A673 (cell line): ENCODE measurements at regions of chr1 and their contacts with region 1.

Region 1: DNA sequence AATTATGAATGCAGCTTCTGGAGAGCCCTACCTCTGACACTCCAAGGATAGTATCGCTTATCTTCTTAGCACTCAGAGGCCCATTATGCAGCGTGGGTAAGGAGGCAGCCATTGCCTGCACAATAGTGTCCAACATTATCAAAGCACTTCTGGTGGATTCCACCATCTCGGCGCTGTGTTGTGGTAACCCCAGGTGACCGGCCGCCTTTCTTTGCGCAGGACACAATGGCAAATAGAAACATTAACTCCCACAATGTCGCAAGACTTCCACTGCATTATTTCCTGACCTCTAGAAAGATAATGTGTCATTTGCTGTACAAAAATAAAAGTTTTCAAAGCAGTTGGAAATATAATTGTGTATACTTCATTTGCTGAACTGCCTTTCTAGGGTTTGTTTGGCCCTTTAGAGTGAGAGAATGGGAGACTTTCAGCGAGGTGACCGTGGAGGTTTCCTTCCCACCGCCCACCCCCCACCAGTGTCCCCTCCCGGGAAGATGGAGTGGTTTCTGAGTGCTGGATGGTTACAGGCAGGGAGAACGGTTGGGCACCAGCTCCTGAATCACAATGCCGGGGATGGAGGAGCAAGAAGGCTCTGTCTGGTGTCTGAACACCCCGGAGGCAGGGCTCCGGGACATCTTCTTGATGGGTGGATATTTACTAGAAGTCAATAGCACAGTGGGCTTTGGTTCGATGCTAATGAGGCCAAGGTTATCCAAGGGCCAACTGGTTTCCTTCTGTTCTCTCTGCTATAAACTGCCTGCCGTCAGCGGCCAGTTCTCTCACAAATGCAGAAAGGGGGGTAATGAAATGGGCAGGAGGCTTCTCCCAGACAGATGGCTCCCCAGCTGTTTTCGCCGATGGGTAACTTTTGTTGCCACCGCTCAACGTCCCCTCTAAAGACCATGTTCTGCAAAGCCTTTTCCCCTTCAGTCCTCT is 215.4 kb upstream of the PROX1 start:
- DNase-seq: no peak
- H3K4me3 ChIP-seq: no peak overlapping the region
- H3K27ac ChIP-seq: no peak overlapping the region
- H3K4me1 ChIP-seq: no peaks in the 10 kb centered on the region
- H3K27me3 ChIP-seq: peaks cover 43% of the 10 kb centered on the region
- CTCF ChIP-seq: no peak

Region 2: DNA sequence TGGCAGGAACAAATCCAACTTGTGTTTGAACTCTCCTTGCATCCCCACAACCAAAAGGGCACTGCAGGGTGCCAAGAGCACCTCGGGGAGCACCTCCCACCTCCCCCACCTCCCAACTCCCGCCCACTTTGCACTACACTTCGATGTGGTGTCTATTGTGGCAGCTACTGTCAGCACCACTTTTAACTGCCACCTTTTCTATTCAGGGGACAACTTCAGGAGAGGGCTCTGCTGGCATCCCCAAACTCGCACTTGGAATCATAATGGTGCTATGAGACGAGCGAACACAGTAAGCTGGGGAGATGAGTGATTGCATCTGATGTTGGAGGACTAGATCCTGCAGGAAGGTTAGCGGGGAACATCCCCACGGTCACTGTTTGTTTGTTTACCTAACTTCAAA is 22.8 kb before region 1 on chr1:
- CTCF ChIA-PET with region 1: no interaction called
- POLR2A ChIA-PET with region 1: no interaction called
- intact Hi-C with region 1: loop called (anchors 1 kb)
- DNase-seq: no peak
- H3K4me3 ChIP-seq: no peak overlapping the region
- H3K27ac ChIP-seq: no peak overlapping the region
- H3K4me1 ChIP-seq: no peaks in the 10 kb centered on the region
- H3K27me3 ChIP-seq: peaks cover 23% of the 10 kb centered on the region
- CTCF ChIP-seq: no peak

Region 3: GRCh38 chr1:213883618-213884017 is 111.2 kb after region 1 on chr1:
- CTCF ChIA-PET with region 1: no interaction called
- POLR2A ChIA-PET with region 1: no interaction called
- intact Hi-C with region 1: no loop called
- DNase-seq: no peak
- H3K4me3 ChIP-seq: no peak overlapping the region
- H3K27ac ChIP-seq: no peak overlapping the region
- H3K4me1 ChIP-seq: no peaks in the 10 kb centered on the region
- H3K27me3 ChIP-seq: peaks cover 37% of the 10 kb centered on the region
- CTCF ChIP-seq: no peak

Region 4: DNA sequence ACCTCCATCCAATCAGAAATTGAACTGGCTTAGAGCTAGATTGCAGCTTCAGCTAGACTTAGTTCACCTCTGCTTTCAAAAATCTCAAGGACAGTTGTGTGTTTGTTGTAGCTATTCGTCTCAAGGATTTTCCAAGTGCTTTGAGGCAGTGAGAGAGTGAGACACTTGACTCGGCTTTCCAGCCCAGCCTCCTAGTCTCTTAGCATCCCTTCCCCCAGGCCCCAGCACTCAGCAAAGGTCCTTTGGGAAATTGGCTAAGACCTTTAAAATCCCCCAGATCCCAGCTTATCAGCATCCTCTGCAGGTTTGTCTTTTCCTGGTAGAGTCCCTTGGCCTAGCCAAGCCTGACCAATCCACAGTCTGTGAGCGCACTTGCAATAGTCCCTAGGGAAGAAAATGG is 167.5 kb after region 1 on chr1:
- CTCF ChIA-PET with region 1: no interaction called
- POLR2A ChIA-PET with region 1: no interaction called
- intact Hi-C with region 1: no loop called
- DNase-seq: no peak
- H3K4me3 ChIP-seq: no peak overlapping the region
- H3K27ac ChIP-seq: no peak overlapping the region
- H3K4me1 ChIP-seq: no peaks in the 10 kb centered on the region
- H3K27me3 ChIP-seq: peaks cover 17% of the 10 kb centered on the region
- CTCF ChIP-seq: no peak

Region 5: GRCh38 chr1:214102907-214103306 is 330.5 kb after region 1 on chr1:
- CTCF ChIA-PET with region 1: no interaction called
- POLR2A ChIA-PET with region 1: interaction called, 10 read pairs
- intact Hi-C with region 1: no loop called
- DNase-seq: no peak
- H3K4me3 ChIP-seq: no peak overlapping the region
- H3K27ac ChIP-seq: no peak overlapping the region
- H3K4me1 ChIP-seq: no peaks in the 10 kb centered on the region
- H3K27me3 ChIP-seq: peaks cover 61% of the 10 kb centered on the region
- CTCF ChIP-seq: no peak